CD8-positive, alpha-beta T cell (primary cell): ENCODE measurements at regions of chr5 and their contacts with region 1.

Region 1: GRCh38 chr5:76256116-76256889 is 146.8 kb upstream of the IQGAP2 start:
- DNase-seq: peak; percentile 15 to 82 (median 57)
- ATAC-seq: peak; percentile 98
- H3K4me3 ChIP-seq: no peak overlapping the region
- H3K4me3 Mint-ChIP-seq: peak overlapping the region; percentile 30
- H3K27ac ChIP-seq: no peak overlapping the region
- H3K27ac Mint-ChIP-seq: no peak overlapping the region
- H3K4me1 ChIP-seq: peaks cover 3% of the 10 kb centered on the region
- H3K4me1 Mint-ChIP-seq: peaks cover 3% of the 10 kb centered on the region
- H3K27me3 ChIP-seq: peaks cover 0 to 3% of the 10 kb centered on the region in 2 experiments
- H3K27me3 Mint-ChIP-seq: peaks cover 9% of the 10 kb centered on the region
- CTCF ChIP-seq: peak; percentile 62

Region 2: GRCh38 chr5:74673011-74673790 is 1583.1 kb before region 1 on chr5:
- CTCF ChIA-PET with region 1: no interaction called
- POLR2A ChIA-PET with region 1: no interaction called
- intact Hi-C with region 1: loop called in 1 of 2 experiments (anchors 10 kb)
- DNase-seq: peak in 2 of 9 experiments; percentile 32 to 44
- ATAC-seq: no peak
- H3K4me3 ChIP-seq: no peak overlapping the region
- H3K4me3 Mint-ChIP-seq: no peak overlapping the region
- H3K27ac ChIP-seq: no peak overlapping the region
- H3K27ac Mint-ChIP-seq: no peak overlapping the region
- H3K4me1 ChIP-seq: no peaks in the 10 kb centered on the region
- H3K4me1 Mint-ChIP-seq: peaks cover 2% of the 10 kb centered on the region
- H3K27me3 ChIP-seq: peaks cover 0 to 3% of the 10 kb centered on the region in 2 experiments
- H3K27me3 Mint-ChIP-seq: peaks cover 10% of the 10 kb centered on the region
- CTCF ChIP-seq: no peak

Region 3: GRCh38 chr5:75734913-75735789 is 521.2 kb before region 1 on chr5:
- CTCF ChIA-PET with region 1: interaction called, 3 read pairs
- POLR2A ChIA-PET with region 1: no interaction called
- intact Hi-C with region 1: loop called in 1 of 2 experiments (anchors 5 kb)
- DNase-seq: peak in 2 of 9 experiments; percentile 25 to 39
- ATAC-seq: no peak
- H3K4me3 ChIP-seq: no peak overlapping the region
- H3K4me3 Mint-ChIP-seq: no peak overlapping the region
- H3K27ac ChIP-seq: no peak overlapping the region
- H3K27ac Mint-ChIP-seq: no peak overlapping the region
- H3K4me1 ChIP-seq: no peaks in the 10 kb centered on the region
- H3K4me1 Mint-ChIP-seq: no peaks in the 10 kb centered on the region
- H3K27me3 ChIP-seq: no peaks in the 10 kb centered on the region
- H3K27me3 Mint-ChIP-seq: no peaks in the 10 kb centered on the region
- CTCF ChIP-seq: no peak

Region 4: GRCh38 chr5:76016258-76016657 is 240.0 kb before region 1 on chr5:
- CTCF ChIA-PET with region 1: no interaction called
- POLR2A ChIA-PET with region 1: no interaction called
- intact Hi-C with region 1: loop called in 1 of 2 experiments (anchors 10 kb)
- DNase-seq: peak in 1 of 9 experiments; percentile 3
- ATAC-seq: no peak
- H3K4me3 ChIP-seq: no peak overlapping the region
- H3K4me3 Mint-ChIP-seq: no peak overlapping the region
- H3K27ac ChIP-seq: no peak overlapping the region
- H3K27ac Mint-ChIP-seq: no peak overlapping the region
- H3K4me1 ChIP-seq: no peaks in the 10 kb centered on the region
- H3K4me1 Mint-ChIP-seq: no peaks in the 10 kb centered on the region
- H3K27me3 ChIP-seq: no peaks in the 10 kb centered on the region
- H3K27me3 Mint-ChIP-seq: peaks cover 29% of the 10 kb centered on the region
- CTCF ChIP-seq: no peak

Region 5: DNA sequence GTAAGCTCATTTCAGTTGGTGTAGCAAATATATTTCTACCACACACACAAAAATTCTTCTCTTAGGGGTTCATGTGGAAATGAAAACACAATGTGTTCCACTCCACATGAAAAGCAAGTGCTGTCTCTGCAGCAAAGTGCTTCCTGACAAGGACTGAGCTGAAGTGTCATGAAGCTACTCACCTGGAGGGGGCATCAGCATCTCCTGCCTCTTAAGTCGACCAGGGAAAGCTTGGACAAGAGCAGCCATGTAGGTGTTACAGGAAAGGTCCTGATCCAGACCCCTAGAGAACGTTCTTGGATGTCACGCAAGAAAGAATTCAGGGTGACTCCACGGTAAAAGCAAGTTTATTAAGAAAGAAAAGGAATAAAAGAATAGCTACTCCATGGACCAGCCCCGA is 110.4 kb before region 1 on chr5:
- CTCF ChIA-PET with region 1: interaction called, 3 read pairs
- POLR2A ChIA-PET with region 1: interaction called, 3 read pairs
- intact Hi-C with region 1: loop called in 1 of 2 experiments (anchors 10 kb)
- DNase-seq: peak in 2 of 9 experiments; percentile 31 to 34
- ATAC-seq: no peak
- H3K4me3 ChIP-seq: no peak overlapping the region
- H3K4me3 Mint-ChIP-seq: no peak overlapping the region
- H3K27ac ChIP-seq: no peak overlapping the region
- H3K27ac Mint-ChIP-seq: no peak overlapping the region
- H3K4me1 ChIP-seq: no peaks in the 10 kb centered on the region
- H3K4me1 Mint-ChIP-seq: no peaks in the 10 kb centered on the region
- H3K27me3 ChIP-seq: no peaks in the 10 kb centered on the region
- H3K27me3 Mint-ChIP-seq: peaks cover 5% of the 10 kb centered on the region
- CTCF ChIP-seq: no peak

Region 6: DNA sequence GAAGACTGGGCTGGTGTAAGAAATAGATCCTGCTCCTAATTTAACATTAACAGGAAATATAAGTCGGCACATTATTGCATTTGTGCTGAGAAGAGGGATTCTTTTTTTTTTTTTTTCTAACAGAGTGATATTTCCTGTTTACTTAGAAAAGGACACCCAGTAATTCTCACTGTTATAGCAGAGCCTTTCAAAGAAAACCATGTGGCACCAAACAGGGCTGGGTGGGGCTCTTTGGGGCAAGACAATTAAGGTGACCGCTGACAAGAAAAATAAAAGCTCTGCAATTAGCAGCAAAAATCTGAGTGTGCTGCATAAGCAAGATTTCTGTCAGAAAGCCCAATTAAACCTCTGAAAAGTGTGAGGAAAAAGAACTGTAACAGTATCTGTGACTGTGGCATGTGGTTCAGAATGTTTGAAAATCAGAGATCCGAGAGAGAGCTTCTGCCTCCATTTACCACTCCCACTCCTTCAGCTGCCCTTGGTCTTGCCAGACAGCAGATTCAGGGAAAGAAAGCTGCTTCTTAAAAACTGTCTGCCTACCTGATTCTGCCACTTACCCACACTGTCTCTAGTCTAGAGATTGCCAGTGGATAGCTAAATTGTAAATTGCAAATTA is 69.7 kb after region 1 on chr5:
- CTCF ChIA-PET with region 1: no interaction called
- POLR2A ChIA-PET with region 1: no interaction called
- intact Hi-C with region 1: loop called in 1 of 2 experiments (anchors 10 kb)
- DNase-seq: peak in 8 of 9 experiments; percentile 27 to 75 (median 42)
- ATAC-seq: peak; percentile 90
- H3K4me3 ChIP-seq: peak overlapping the region in 1 of 2 experiments; percentile 15
- H3K4me3 Mint-ChIP-seq: peak overlapping the region; percentile 73
- H3K27ac ChIP-seq: peak overlapping the region; percentile 39 to 78
- H3K27ac Mint-ChIP-seq: peak overlapping the region; percentile 95
- H3K4me1 ChIP-seq: peaks cover 39% of the 10 kb centered on the region
- H3K4me1 Mint-ChIP-seq: peaks cover 57% of the 10 kb centered on the region
- H3K27me3 ChIP-seq: no peaks in the 10 kb centered on the region
- H3K27me3 Mint-ChIP-seq: no peaks in the 10 kb centered on the region
- CTCF ChIP-seq: no peak

Region 7: GRCh38 chr5:76679231-76679630 is 422.9 kb after region 1 on chr5:
- CTCF ChIA-PET with region 1: no interaction called
- POLR2A ChIA-PET with region 1: no interaction called
- intact Hi-C with region 1: no loop called
- DNase-seq: no peak
- ATAC-seq: no peak
- H3K4me3 ChIP-seq: no peak overlapping the region
- H3K4me3 Mint-ChIP-seq: no peak overlapping the region
- H3K27ac ChIP-seq: no peak overlapping the region
- H3K27ac Mint-ChIP-seq: no peak overlapping the region
- H3K4me1 ChIP-seq: no peaks in the 10 kb centered on the region
- H3K4me1 Mint-ChIP-seq: no peaks in the 10 kb centered on the region
- H3K27me3 ChIP-seq: no peaks in the 10 kb centered on the region
- H3K27me3 Mint-ChIP-seq: no peaks in the 10 kb centered on the region
- CTCF ChIP-seq: no peak